Sigmoid colon (tissue), 7 donors: ENCODE measurements at regions of chr5 and their contacts with region 1.

Region 1: GRCh38 chr5:7576023-7576715 is 180.2 kb downstream of the ADCY2 start:
- DNase-seq: peak; percentile 82
- H3K4me3 ChIP-seq: no peak overlapping the region
- H3K27ac ChIP-seq: peak overlapping the region in 3 of 4 donors; percentile 56 to 66 (median 64)
- H3K4me1 ChIP-seq: peaks cover 0 to 28% (median 23%) of the 10 kb centered on the region in 4 donors
- H3K27me3 ChIP-seq: no peaks in the 10 kb centered on the region
- CTCF ChIP-seq: no peak
- EP300 ChIP-seq: peak in 3 of 4 donors; percentile 3 to 75 (median 4)
- POLR2A ChIP-seq: no peak

Region 2: GRCh38 chr5:7453947-7454346 is 122.2 kb before region 1 on chr5:
- intact Hi-C with region 1: no loop called
- DNase-seq: no peak
- H3K4me3 ChIP-seq: no peak overlapping the region
- H3K27ac ChIP-seq: no peak overlapping the region
- H3K4me1 ChIP-seq: no peaks in the 10 kb centered on the region
- H3K27me3 ChIP-seq: no peaks in the 10 kb centered on the region
- CTCF ChIP-seq: no peak
- EP300 ChIP-seq: no peak
- POLR2A ChIP-seq: no peak

Region 3: GRCh38 chr5:7592910-7593309 is 16.7 kb after region 1 on chr5:
- intact Hi-C with region 1: no loop called
- DNase-seq: no peak
- H3K4me3 ChIP-seq: no peak overlapping the region
- H3K27ac ChIP-seq: no peak overlapping the region
- H3K4me1 ChIP-seq: peaks cover 0 to 10% (median 2%) of the 10 kb centered on the region in 4 donors
- H3K27me3 ChIP-seq: no peaks in the 10 kb centered on the region
- CTCF ChIP-seq: peak in 3 of 4 experiments; percentile 11 to 21 (median 13)
- EP300 ChIP-seq: no peak
- POLR2A ChIP-seq: no peak

Region 4: GRCh38 chr5:7650755-7651154 is 74.6 kb after region 1 on chr5:
- intact Hi-C with region 1: loop called (anchors 5 kb)
- DNase-seq: peak; percentile 85
- H3K4me3 ChIP-seq: no peak overlapping the region
- H3K27ac ChIP-seq: peak overlapping the region; percentile 47 to 77 (median 60)
- H3K4me1 ChIP-seq: peaks cover 0 to 32% (median 14%) of the 10 kb centered on the region in 4 donors
- H3K27me3 ChIP-seq: no peaks in the 10 kb centered on the region
- CTCF ChIP-seq: no peak
- EP300 ChIP-seq: no peak
- POLR2A ChIP-seq: no peak

Region 5: GRCh38 chr5:8013948-8014710 is 438.0 kb after region 1 on chr5:
- intact Hi-C with region 1: no loop called
- DNase-seq: no peak
- H3K4me3 ChIP-seq: no peak overlapping the region
- H3K27ac ChIP-seq: no peak overlapping the region
- H3K4me1 ChIP-seq: no peaks in the 10 kb centered on the region
- H3K27me3 ChIP-seq: no peaks in the 10 kb centered on the region
- CTCF ChIP-seq: no peak
- EP300 ChIP-seq: no peak
- POLR2A ChIP-seq: no peak

Region 6: GRCh38 chr5:8288334-8288733 is 712.2 kb after region 1 on chr5:
- intact Hi-C with region 1: no loop called
- DNase-seq: no peak
- H3K4me3 ChIP-seq: no peak overlapping the region
- H3K27ac ChIP-seq: no peak overlapping the region
- H3K4me1 ChIP-seq: no peaks in the 10 kb centered on the region
- H3K27me3 ChIP-seq: no peaks in the 10 kb centered on the region
- CTCF ChIP-seq: no peak
- EP300 ChIP-seq: no peak
- POLR2A ChIP-seq: no peak